Naive thymus-derived CD4-positive, alpha-beta T cell (primary cell): ENCODE measurements at regions of chr3 and their contacts with region 1.

Region 1: DNA sequence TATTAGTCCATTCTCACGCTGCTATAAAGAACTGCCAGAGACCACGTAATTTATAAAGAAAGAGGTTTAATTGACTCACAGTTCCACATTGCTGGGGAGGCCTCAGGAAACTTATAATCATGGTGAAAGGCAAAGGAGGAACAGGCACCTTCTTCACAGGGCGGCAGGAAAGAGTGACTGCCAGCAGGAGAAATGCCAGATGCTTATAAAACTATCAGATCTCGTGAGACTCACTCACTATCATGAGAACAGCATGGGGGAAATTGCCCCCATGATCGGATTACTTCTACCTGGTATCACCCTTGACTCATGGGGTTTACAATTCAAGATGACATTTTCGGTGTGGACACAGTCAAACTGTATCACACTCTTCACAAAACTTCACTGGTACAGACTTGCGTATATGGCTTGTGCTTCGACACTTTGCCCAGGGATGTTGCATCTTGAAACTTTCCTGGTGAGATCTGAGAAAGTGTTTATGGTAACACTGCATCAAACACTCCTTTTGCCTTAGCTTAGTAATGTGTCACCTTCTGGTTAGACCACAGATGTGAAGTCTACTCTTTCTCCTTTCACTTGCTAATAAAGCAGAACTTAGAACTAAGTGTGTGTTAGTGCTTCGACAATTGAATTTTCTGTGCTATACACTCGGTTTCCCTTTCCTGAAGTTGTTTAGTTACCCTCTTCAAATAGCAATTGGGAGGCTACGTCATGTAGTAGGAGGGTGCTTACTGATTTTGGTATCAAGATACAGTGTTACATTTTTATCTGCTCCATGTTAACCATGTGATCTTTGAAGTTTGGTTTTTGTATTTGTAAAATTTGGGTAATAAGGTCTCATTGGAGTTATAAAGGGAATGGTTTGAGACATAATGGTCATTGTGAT is 185.7 kb downstream of the LPP start:
- DNase-seq: peak in 1 of 9 donors; percentile 41
- ATAC-seq: peak; percentile 89
- H3K4me3 ChIP-seq: peak overlapping the region; percentile 5
- H3K4me3 Mint-ChIP-seq: peak overlapping the region in 4 of 10 donors; percentile 2 to 71 (median 4)
- H3K27ac ChIP-seq: no peak overlapping the region
- H3K27ac Mint-ChIP-seq: peak overlapping the region in 3 of 9 donors; percentile 6 to 80 (median 80)
- H3K4me1 ChIP-seq: peaks cover 0 to 17% of the 10 kb centered on the region in 2 donors
- H3K4me1 Mint-ChIP-seq: peaks cover 12 to 33% (median 19%) of the 10 kb centered on the region in 7 donors
- H3K27me3 ChIP-seq: no peaks in the 10 kb centered on the region
- H3K27me3 Mint-ChIP-seq: peaks cover 0 to 12% (median 0%) of the 10 kb centered on the region in 5 donors

Region 2: DNA sequence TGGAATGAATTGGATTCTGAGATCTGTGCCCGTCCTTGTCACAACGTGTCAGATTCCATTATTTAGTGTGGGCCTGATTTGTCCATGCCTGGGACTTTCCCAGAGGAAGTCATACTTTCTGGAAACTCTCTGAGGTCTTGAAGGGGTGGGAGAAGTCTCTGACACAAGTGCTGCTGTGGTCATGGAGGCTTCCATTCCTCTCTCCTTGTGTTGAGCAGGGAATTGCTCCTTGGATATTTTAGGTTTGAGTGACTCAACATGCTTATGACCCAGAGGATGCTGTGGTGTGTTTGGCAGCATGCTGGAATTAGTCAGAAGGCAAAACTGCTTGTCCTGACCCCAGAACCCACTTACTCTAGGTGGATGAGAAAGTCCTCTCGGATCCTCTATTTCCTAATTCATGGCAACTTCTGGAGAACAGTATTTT is 53.6 kb before region 1 on chr3:
- CTCF ChIA-PET with region 1: no interaction called
- POLR2A ChIA-PET with region 1: interaction called, 3 read pairs
- intact Hi-C with region 1: loop called in 1 of 2 experiments (anchors 1 kb)
- DNase-seq: no peak
- ATAC-seq: no peak
- H3K4me3 ChIP-seq: no peak overlapping the region
- H3K4me3 Mint-ChIP-seq: no peak overlapping the region
- H3K27ac ChIP-seq: no peak overlapping the region
- H3K27ac Mint-ChIP-seq: peak overlapping the region in 2 of 9 donors; percentile 14 to 39
- H3K4me1 ChIP-seq: peaks cover 7% of the 10 kb centered on the region in 2 donors
- H3K4me1 Mint-ChIP-seq: peaks cover 19 to 49% (median 28%) of the 10 kb centered on the region in 7 donors
- H3K27me3 ChIP-seq: no peaks in the 10 kb centered on the region
- H3K27me3 Mint-ChIP-seq: no peaks in the 10 kb centered on the region

Region 3: DNA sequence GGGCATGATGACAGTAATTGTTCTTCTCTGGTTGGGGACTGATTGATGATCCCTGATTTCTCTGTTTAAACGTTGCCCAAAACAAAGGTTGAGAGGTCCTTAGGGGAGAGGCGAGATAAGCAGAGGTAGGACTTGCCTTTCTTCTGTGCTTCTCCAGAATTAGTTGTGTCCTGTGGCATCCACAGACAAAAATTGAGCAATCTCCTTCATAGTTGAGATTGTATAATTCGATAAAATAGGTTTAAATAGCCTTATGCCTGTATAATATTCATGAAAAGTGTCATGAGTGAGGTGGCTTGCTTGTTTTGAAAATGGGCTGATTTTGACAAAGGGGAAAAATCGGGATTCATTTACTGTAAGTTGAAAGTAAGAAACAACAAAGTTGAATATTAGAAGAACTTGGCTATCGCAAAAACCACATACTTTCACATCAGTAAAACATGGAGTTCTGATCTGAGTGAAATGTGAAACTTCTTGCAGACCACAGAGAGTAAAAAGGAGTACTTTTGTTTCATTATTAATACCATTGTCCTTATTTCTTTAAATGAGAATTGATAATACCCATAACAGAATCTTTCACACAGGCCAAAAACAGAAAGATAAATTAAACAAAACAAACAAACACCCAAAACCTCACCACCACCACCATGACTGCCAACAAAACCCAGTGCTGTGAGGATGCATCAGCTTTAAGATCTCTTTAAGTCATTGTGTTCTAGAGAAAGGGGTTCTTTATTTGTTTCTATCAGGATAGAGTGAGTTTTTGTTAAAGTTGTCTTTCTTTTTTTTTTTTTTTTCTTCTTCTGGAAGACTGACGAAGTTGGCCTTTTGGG is 30.0 kb before region 1 on chr3:
- CTCF ChIA-PET with region 1: no interaction called
- POLR2A ChIA-PET with region 1: no interaction called
- intact Hi-C with region 1: loop called in 1 of 2 experiments (anchors 1 kb)
- DNase-seq: peak in 1 of 9 donors; percentile 42
- ATAC-seq: no peak
- H3K4me3 ChIP-seq: no peak overlapping the region
- H3K4me3 Mint-ChIP-seq: peak overlapping the region in 2 of 10 donors; percentile 3 to 75
- H3K27ac ChIP-seq: no peak overlapping the region
- H3K27ac Mint-ChIP-seq: peak overlapping the region in 4 of 9 donors; percentile 10 to 77 (median 44)
- H3K4me1 ChIP-seq: no peaks in the 10 kb centered on the region
- H3K4me1 Mint-ChIP-seq: peaks cover 9 to 25% (median 14%) of the 10 kb centered on the region in 7 donors
- H3K27me3 ChIP-seq: no peaks in the 10 kb centered on the region
- H3K27me3 Mint-ChIP-seq: peaks cover 0 to 10% (median 0%) of the 10 kb centered on the region in 5 donors

Region 4: GRCh38 chr3:188432802-188433520 is 93.3 kb after region 1 on chr3:
- CTCF ChIA-PET with region 1: no interaction called
- POLR2A ChIA-PET with region 1: no interaction called
- intact Hi-C with region 1: loop called in 1 of 2 experiments (anchors 5 kb)
- DNase-seq: peak in 4 of 9 donors; percentile 4 to 32 (median 15)
- ATAC-seq: peak; percentile 75
- H3K4me3 ChIP-seq: no peak overlapping the region
- H3K4me3 Mint-ChIP-seq: peak overlapping the region in 2 of 10 donors; percentile 58 to 72
- H3K27ac ChIP-seq: no peak overlapping the region
- H3K27ac Mint-ChIP-seq: peak overlapping the region in 6 of 9 donors; percentile 60 to 93 (median 78)
- H3K4me1 ChIP-seq: no peaks in the 10 kb centered on the region
- H3K4me1 Mint-ChIP-seq: peaks cover 20 to 37% (median 31%) of the 10 kb centered on the region in 7 donors
- H3K27me3 ChIP-seq: no peaks in the 10 kb centered on the region
- H3K27me3 Mint-ChIP-seq: no peaks in the 10 kb centered on the region